Left cardiac atrium (tissue), 4 donors: ENCODE measurements at regions of chr16 and their contacts with region 1.

Region 1: GRCh38 chr16:78288888-78289287 is 189.4 kb downstream of the WWOX start:
- DNase-seq: no peak
- ATAC-seq: no peak

Region 2: GRCh38 chr16:76370344-76370743 is 1918.5 kb before region 1 on chr16:
- intact Hi-C with region 1: loop called in 1 of 2 experiments (anchors 10 kb)
- DNase-seq: no peak
- ATAC-seq: no peak

Region 3: DNA sequence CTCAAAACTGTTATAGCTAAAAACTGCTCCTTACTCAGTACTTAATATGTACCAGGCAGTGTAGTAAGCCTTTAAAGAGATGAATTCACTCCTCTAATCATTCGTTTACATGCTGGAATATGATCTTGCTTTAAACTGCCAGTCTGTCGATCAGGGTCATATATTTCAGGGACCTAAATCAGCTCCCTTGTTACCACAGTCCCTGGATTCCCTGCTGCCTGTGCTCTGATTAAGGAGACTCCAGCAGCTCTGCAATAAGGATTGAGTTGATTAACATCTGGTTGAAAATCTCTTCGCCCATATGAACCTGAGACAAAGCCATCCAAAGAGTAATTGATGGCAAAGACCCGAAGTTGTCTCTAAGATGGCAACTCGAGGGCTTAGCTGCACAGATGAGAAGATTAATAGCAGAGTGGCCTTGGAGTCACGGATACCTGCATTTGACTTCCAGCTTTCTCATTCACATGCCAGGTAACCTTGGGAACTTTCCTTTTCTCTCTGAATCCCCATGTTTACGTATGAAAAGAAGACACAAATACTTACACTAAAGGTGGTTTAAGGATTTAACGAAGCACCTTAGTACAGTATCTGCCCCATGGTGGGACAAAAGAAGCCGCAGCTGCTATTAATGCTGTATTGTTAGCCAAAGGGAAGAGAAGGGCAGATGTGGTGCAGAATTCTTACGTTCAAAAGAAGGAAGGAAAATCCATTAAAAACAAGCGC is 432.3 kb before region 1 on chr16:
- intact Hi-C with region 1: no loop called
- DNase-seq: no peak
- ATAC-seq: no peak

Region 4: DNA sequence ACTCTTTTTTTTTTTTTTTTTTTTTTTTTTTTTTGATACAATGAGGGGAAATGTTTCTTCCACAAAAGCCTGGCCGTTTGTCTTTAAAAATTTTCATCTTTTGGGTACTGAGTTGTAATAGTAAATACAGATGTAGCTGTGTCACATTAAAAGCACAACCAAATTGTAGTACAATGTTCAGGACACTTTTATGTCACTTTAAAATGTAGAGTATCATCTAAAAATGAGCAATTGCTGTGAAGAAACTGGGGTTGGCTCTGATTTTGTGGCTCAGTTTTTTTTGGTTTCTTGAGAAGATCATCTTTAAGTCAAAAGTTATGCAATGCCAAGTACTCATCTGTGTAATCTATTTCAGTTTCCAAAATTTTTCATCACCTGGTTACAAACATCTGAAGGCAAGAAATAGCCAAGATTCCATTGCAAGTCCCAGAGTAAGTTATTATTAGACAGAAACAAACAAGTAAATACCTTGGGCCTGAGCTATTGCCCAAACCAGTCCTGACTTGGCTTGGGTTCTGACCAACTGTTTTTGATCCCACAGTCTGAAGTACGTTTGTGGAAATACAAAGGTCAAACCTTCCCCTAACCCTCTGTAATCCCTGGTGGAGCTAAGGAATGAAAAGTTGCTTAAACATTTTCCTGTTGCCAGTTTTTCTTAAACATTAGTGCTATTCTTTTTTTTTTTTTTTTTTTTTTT is 527.8 kb after region 1 on chr16:
- intact Hi-C with region 1: no loop called
- DNase-seq: no peak
- ATAC-seq: peak; percentile 67 to 91